ENCODE measurements at regions of chr13 and their contacts with region 1.

Region 1: GRCh38 chr13:40682449-40683240 is 16.2 kb upstream of the FOXO1 start:
- DNase-seq: no peak
- ATAC-seq: no peak
- H3K4me3 ChIP-seq: no peak overlapping the region
- H3K27ac ChIP-seq: no peak overlapping the region
- H3K4me1 ChIP-seq: peaks cover 7% of the 10 kb centered on the region
- H3K27me3 ChIP-seq: no peaks in the 10 kb centered on the region
- CTCF ChIP-seq: peak; percentile 70

Region 2: GRCh38 chr13:40069173-40070044 is 613.2 kb before region 1 on chr13:
- intact Hi-C with region 1: loop called (anchors 10 kb)
- DNase-seq: peak; percentile 68
- ATAC-seq: peak; percentile 91
- H3K4me3 ChIP-seq: no peak overlapping the region
- H3K27ac ChIP-seq: no peak overlapping the region
- H3K4me1 ChIP-seq: peaks cover 6% of the 10 kb centered on the region
- H3K27me3 ChIP-seq: no peaks in the 10 kb centered on the region
- CTCF ChIP-seq: peak; percentile 87

Region 3: GRCh38 chr13:40503966-40504591 is 178.6 kb before region 1 on chr13:
- intact Hi-C with region 1: no loop called
- DNase-seq: no peak
- ATAC-seq: peak; percentile 27 to 61
- H3K4me3 ChIP-seq: no peak overlapping the region
- H3K27ac ChIP-seq: no peak overlapping the region
- H3K4me1 ChIP-seq: peaks cover 5% of the 10 kb centered on the region
- H3K27me3 ChIP-seq: no peaks in the 10 kb centered on the region
- CTCF ChIP-seq: no peak

Region 4: DNA sequence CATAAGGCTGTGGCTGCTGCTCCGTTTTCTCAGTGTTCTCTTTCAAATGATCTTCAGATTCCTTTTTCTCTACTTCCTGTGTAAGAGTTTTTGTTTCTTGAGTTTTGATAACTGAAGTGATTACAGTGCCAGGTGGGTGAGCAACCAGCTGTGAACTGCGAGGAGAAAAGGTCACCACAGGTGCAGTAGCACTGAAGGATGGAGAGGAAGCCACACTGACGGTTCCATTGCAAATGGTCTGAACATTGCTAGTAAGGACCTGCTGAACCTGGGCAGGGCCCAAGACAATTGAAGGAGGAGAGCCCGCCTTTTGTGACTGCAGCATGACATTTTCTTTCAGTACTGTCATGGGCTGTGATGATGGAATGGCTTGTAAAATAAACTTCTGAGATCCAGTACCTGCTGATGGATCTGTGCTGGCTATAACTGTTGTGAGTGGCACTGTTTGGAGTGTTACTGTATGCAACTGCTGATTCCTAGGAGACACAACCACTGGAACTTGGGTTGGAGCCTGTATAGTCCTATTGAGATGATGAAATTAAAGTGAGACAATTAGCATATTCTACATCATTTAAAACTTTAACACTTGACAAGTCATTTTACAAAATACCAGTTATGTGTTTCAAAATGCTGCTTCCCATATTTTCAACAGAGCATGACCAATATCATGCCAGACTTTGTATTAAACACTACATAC is 251.0 kb after region 1 on chr13:
- intact Hi-C with region 1: no loop called
- DNase-seq: no peak
- ATAC-seq: no peak
- H3K4me3 ChIP-seq: no peak overlapping the region
- H3K27ac ChIP-seq: no peak overlapping the region
- H3K4me1 ChIP-seq: no peaks in the 10 kb centered on the region
- H3K27me3 ChIP-seq: no peaks in the 10 kb centered on the region
- CTCF ChIP-seq: no peak